Ovary (tissue), 10 donors: ENCODE measurements at regions of chr17 and their contacts with region 1.

Region 1: DNA sequence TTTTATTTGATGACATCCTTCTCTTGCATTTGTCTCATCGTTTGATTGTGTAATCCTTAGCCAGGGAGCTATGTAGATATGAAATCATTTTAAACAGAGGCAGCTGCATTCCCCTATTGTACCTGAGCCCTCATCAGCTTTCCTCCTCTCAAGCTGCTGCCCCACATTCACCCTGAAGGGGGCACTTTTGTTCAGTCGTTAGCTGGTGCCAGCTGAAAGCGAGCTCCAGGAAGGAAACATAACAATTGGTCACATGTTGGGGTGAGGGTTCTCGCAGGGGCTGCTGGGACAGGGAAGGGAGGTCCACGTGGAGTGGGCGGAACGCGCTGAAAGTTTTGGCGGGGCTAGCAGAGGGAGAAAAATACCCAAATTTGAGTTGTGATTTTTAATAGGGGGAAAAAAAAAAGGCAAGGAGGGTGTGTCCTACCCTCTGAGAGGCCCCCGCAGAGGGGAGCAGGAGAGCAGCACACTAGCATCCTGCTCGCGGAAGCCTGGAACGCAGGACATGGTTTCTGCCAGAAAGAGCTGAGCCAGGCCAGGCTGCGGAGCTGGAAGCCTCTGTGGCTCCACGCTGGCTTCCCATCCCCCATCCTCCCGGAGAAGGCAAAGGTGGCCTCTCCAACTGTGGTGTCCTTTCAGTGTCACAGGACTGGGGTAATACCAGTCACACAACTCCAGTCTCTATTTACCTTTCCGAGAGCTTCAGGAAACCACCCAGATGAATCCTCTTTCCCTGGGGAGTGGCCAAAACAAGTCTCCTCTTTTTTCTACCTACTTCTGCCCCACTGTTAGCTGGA is 8.5 kb upstream of the MSL1 start:
- DNase-seq: peak; percentile 92 to 96 (median 93)
- H3K4me3 ChIP-seq: peak overlapping the region; percentile 21
- H3K27ac ChIP-seq: peak overlapping the region; percentile 89 to 91
- H3K4me1 ChIP-seq: peaks cover 18% of the 10 kb centered on the region
- H3K27me3 ChIP-seq: no peaks in the 10 kb centered on the region
- CTCF ChIP-seq: peak; percentile 77 to 98 (median 93)
- EP300 ChIP-seq: no peak
- POLR2A ChIP-seq: no peak

Region 2: DNA sequence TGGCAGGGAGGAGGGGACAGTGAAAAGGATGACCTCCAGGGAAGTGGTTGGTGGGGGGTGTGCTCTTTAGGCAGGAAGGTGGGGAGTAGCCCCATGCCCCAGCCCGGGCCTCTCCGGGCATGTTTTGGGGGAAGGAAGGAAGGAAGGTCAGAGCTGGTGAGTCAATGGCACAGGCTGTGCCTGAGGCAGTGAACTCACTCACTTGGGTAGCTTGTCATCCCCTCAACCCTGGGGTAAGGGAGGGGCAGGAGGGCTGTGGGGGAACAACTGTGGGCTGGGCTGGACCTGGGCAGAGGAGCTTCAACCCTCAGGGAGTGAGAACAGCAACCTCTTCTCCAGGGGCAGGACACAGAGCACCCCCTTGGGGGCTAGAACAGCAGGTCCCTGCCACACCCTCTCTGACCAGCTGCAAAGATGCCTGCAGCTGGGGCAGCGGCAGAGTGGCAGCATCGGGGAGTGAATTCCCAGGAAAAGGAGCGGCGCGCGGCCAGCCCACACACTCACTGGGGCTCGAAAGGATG is 91.8 kb before region 1 on chr17:
- intact Hi-C with region 1: loop called in 1 of 4 experiments (anchors 5 kb)
- DNase-seq: peak in 2 of 5 donors; percentile 43 to 59
- H3K4me3 ChIP-seq: no peak overlapping the region
- H3K27ac ChIP-seq: peak overlapping the region in 1 of 2 donors; percentile 41
- H3K4me1 ChIP-seq: peaks cover 23% of the 10 kb centered on the region
- H3K27me3 ChIP-seq: no peaks in the 10 kb centered on the region
- CTCF ChIP-seq: no peak
- EP300 ChIP-seq: no peak
- POLR2A ChIP-seq: no peak

Region 3: GRCh38 chr17:40062329-40063186 is 50.8 kb before region 1 on chr17 and contains the start of gene THRA:
- intact Hi-C with region 1: loop called in 2 of 4 experiments (anchors 5 kb)
- DNase-seq: peak; percentile 78 to 83 (median 79)
- H3K4me3 ChIP-seq: peak within 1 kb of the TSS; percentile 63
- H3K27ac ChIP-seq: peak within 1 kb of the TSS; percentile 80 to 85
- H3K4me1 ChIP-seq: peaks cover 15% of the 10 kb centered on the region
- H3K27me3 ChIP-seq: no peaks in the 10 kb centered on the region
- CTCF ChIP-seq: peak in 1 of 3 donors; percentile 13
- EP300 ChIP-seq: no peak
- POLR2A ChIP-seq: peak; percentile 35
- total RNA-seq, gene THRA: 51.4 to 129 (median 89.3) TPM

Region 4: DNA sequence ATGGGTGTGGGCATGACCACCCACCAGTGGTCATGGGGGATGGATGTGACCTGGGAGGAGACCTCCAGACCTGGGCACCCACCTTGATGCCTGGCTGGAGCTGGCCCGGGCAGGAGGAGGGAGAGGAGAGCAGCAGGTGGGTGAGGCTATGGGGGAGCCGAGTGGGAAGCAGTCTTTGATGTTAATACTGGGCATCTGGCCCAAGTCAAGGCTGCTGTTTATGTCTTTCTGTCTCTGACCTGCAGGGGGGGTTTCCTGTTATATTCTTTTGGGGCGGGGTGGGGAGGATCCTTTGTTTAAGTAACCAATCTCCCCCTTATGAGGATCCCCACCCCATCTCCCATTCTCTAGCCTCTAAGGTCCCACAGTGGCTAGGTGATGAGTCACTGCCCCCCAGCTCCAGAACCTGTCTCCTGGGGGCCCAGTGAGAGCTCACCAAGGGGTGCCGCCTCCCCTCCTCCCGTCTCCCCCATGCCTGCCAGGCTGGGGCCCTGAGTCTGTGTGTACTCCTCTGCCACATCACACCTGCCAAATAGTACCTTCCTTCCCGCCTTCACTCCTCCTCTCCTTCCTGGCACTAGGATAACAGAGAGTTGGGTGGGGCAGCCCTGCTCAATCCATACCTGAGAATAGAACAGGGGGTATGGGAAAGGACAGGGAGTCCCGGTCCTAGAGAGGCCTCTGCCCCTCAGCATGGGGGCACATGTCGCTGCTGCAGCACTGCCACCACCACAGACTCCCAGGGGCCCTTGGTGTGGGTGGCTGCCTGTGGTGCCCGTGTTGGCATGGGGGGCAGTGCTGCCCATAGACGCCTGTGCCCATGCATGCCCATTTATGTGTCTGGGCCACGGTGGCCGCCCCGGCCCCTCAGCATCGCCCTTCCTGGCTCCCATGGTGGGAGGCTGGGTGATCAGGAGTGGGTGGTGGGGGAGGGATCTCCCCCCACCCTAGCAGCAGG is 43.3 kb before region 1 on chr17:
- intact Hi-C with region 1: loop called in 2 of 4 experiments (anchors 5 kb)
- DNase-seq: peak; percentile 57 to 71 (median 66)
- H3K4me3 ChIP-seq: peak overlapping the region; percentile 21
- H3K27ac ChIP-seq: peak overlapping the region; percentile 89 to 91
- H3K4me1 ChIP-seq: peaks cover 49% of the 10 kb centered on the region
- H3K27me3 ChIP-seq: no peaks in the 10 kb centered on the region
- CTCF ChIP-seq: peak; percentile 9 to 23 (median 17)
- EP300 ChIP-seq: no peak
- POLR2A ChIP-seq: no peak

Region 5: DNA sequence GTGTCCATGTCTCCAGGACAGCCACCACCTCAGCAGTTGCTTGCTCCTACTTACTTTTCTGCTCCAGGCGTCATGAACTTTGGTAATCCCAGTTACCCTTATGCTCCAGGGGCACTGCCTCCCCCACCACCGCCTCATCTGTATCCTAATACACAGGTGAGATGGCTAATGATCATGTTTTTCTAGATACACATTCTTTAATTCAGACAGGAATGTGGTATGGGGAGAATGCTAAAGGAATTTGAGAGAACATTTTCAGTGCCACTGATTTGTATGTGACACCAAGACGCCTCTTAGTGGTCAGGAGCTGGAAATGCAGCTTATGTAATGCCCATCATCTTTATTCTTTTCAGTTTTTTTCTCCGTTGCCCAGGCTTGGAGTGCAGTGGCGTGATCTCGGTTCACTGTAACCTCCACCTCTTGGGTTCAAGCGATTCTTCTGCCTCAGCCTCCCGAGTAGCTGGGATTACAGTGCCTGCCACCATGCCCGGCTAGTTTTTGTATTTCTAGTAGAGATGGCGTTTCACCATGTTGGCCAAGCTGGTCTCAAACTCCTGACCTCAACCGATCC is 55.0 kb after region 1 on chr17:
- intact Hi-C with region 1: loop called in 2 of 4 experiments (anchors 5 to 10 kb)
- DNase-seq: peak in 1 of 5 donors; percentile 58
- H3K4me3 ChIP-seq: no peak overlapping the region
- H3K27ac ChIP-seq: peak overlapping the region in 1 of 2 donors; percentile 22
- H3K4me1 ChIP-seq: no peaks in the 10 kb centered on the region
- H3K27me3 ChIP-seq: no peaks in the 10 kb centered on the region
- CTCF ChIP-seq: peak; percentile 28 to 91 (median 90)
- EP300 ChIP-seq: no peak
- POLR2A ChIP-seq: no peak